OCI-LY7 (cell line): ENCODE measurements at regions of chr19 and their contacts with region 1.

Region 1: GRCh38 chr19:10106100-10106936 is at the start of gene PPAN:
- DNase-seq: peak; percentile 100
- H3K4me3 ChIP-seq: peak within 1 kb of the TSS; percentile 99
- H3K27ac ChIP-seq: peak within 1 kb of the TSS; percentile 84
- H3K4me1 ChIP-seq: peaks cover 59% of the 10 kb centered on the region
- CTCF ChIP-seq: no peak
- total RNA-seq, gene PPAN: 77.1 and 85.8 TPM in 2 replicates

Region 2: GRCh38 chr19:9796113-9796773 is 310.1 kb before region 1 on chr19:
- CTCF ChIA-PET with region 1: no interaction called
- POLR2A ChIA-PET with region 1: no interaction called
- intact Hi-C with region 1: no loop called
- DNase-seq: peak; percentile 93
- H3K4me3 ChIP-seq: no peak overlapping the region
- H3K27ac ChIP-seq: peak overlapping the region; percentile 18
- H3K4me1 ChIP-seq: peaks cover 11% of the 10 kb centered on the region
- CTCF ChIP-seq: peak; percentile 94

Region 3: GRCh38 chr19:10230861-10231611 is 124.7 kb after region 1 on chr19 and contains the start of gene S1PR2:
- CTCF ChIA-PET with region 1: no interaction called
- POLR2A ChIA-PET with region 1: no interaction called
- intact Hi-C with region 1: loop called (anchors 10 kb)
- DNase-seq: peak; percentile 89
- H3K4me3 ChIP-seq: peak within 1 kb of the TSS; percentile 95
- H3K27ac ChIP-seq: peak within 1 kb of the TSS; percentile 95
- H3K4me1 ChIP-seq: peaks cover 81% of the 10 kb centered on the region
- CTCF ChIP-seq: no peak
- total RNA-seq, gene S1PR2: 27.0 and 27.8 TPM in 2 replicates